PC-3 (cell line): ENCODE measurements at regions of chr5 and their contacts with region 1.

Region 1: GRCh38 chr5:173573126-173573960 is 43.1 kb downstream of the BOD1 start:
- DNase-seq: peak; percentile 86
- ATAC-seq: peak; percentile 94
- H3K4me3 ChIP-seq: peak overlapping the region; percentile 46; the same call in 1 of the 2 replicates
- H3K27ac ChIP-seq: no peak overlapping the region
- H3K4me1 ChIP-seq: peaks cover 11% of the 10 kb centered on the region
- H3K27me3 ChIP-seq: no peaks in the 10 kb centered on the region
- CTCF ChIP-seq: peak; percentile 97

Region 2: DNA sequence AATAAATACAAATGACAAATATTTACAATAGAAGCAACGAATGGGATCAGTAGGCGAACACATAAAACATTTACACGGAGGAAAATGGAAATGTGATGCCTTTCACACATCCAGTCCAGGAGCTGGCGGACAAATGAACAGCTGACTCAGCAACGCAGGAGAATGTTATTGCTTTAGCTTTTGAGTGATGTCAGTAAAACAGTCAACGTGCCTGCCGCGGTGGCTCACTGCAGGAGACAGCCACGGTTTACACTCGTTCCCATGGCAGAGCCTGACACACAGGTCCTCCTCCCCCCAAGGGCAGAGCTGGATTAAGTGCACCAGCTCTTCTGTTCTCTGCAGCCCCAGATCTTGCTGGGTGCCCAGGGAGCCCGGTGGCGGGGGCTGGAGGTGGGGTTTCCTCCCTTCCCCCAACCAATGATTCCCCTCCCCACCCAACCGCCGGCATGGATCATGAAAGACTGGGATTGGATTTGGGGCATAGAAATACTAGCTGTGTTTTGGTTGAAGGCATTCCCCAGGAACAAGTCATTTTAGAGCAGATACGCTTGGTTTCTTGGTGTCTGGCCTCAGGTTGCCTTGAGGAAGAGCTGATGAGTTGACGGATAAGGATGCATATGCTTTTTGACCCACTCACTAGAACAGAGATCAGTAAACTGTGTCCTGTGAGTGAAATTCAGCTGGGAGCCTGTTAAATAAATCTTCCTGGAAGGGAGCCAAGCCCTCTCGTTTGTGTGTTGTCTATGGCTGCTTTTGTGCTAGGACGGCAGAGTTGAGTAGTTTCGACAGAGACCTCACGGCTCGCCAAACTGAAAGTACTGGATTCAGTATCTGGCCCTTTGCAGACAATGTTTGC is 257.6 kb before region 1 on chr5:
- CTCF ChIA-PET with region 1: interaction called, 6 read pairs
- POLR2A ChIA-PET with region 1: no interaction called
- intact Hi-C with region 1: loop called (anchors 5 kb)
- DNase-seq: peak; percentile 57
- ATAC-seq: peak; percentile 46
- H3K4me3 ChIP-seq: no peak overlapping the region
- H3K27ac ChIP-seq: no peak overlapping the region
- H3K4me1 ChIP-seq: peaks cover 9% of the 10 kb centered on the region; the same call in 1 of the 2 replicates
- H3K27me3 ChIP-seq: no peaks in the 10 kb centered on the region
- CTCF ChIP-seq: no peak

Region 3: DNA sequence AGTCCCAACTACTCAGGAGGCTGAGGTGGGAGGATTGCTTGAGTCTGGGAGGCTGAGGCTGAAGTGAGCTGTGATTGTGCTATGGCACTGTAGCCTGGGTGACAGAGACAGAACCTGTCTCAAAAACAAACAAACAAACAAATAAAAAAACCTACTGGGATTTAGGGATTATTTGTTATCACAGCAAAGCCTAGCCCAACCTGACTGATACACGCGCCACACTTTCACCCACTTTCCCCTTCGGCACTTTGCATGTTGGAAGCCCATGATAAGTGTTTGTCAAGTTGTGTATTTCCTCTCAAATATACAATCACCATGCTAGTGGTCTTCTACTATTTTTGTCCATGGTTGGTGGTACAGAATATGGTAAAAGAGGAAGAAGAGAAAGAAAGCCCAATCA is 194.6 kb before region 1 on chr5:
- CTCF ChIA-PET with region 1: no interaction called
- POLR2A ChIA-PET with region 1: no interaction called
- intact Hi-C with region 1: no loop called
- DNase-seq: no peak
- ATAC-seq: no peak
- H3K4me3 ChIP-seq: no peak overlapping the region
- H3K27ac ChIP-seq: no peak overlapping the region
- H3K4me1 ChIP-seq: no peaks in the 10 kb centered on the region
- H3K27me3 ChIP-seq: peaks cover 17% of the 10 kb centered on the region; the same call in 1 of the 2 replicates
- CTCF ChIP-seq: no peak

Region 4: GRCh38 chr5:173618927-173619519 is 45.7 kb after region 1 on chr5:
- CTCF ChIA-PET with region 1: no interaction called
- POLR2A ChIA-PET with region 1: no interaction called
- intact Hi-C with region 1: no loop called
- DNase-seq: peak; percentile 87
- ATAC-seq: no peak
- H3K4me3 ChIP-seq: no peak overlapping the region
- H3K27ac ChIP-seq: no peak overlapping the region
- H3K4me1 ChIP-seq: peaks cover 36% of the 10 kb centered on the region
- H3K27me3 ChIP-seq: no peaks in the 10 kb centered on the region
- CTCF ChIP-seq: peak; percentile 97

Region 5: GRCh38 chr5:173745123-173745522 is 171.8 kb after region 1 on chr5:
- CTCF ChIA-PET with region 1: no interaction called
- POLR2A ChIA-PET with region 1: no interaction called
- intact Hi-C with region 1: no loop called
- DNase-seq: no peak
- ATAC-seq: no peak
- H3K4me3 ChIP-seq: peak overlapping the region; percentile 33
- H3K27ac ChIP-seq: no peak overlapping the region
- H3K4me1 ChIP-seq: peaks cover 17% of the 10 kb centered on the region
- H3K27me3 ChIP-seq: no peaks in the 10 kb centered on the region
- CTCF ChIP-seq: no peak